Activated T-helper 1 cell treated with anti-CD3 and anti-CD28 coated beads, Interleukin-12 subunit alpha, Interleukin-12 subunit beta, Interleukin-2, Interleukin-4 antibody, amounts not matched to agents 30 ng/mL and 10 ng/mL and 1 ng/mL, durations not matched to agents 14 hours and 24 hours and 36 hours (primary cell): ENCODE measurements at regions of chr7 and their contacts with region 1.

Region 1: DNA sequence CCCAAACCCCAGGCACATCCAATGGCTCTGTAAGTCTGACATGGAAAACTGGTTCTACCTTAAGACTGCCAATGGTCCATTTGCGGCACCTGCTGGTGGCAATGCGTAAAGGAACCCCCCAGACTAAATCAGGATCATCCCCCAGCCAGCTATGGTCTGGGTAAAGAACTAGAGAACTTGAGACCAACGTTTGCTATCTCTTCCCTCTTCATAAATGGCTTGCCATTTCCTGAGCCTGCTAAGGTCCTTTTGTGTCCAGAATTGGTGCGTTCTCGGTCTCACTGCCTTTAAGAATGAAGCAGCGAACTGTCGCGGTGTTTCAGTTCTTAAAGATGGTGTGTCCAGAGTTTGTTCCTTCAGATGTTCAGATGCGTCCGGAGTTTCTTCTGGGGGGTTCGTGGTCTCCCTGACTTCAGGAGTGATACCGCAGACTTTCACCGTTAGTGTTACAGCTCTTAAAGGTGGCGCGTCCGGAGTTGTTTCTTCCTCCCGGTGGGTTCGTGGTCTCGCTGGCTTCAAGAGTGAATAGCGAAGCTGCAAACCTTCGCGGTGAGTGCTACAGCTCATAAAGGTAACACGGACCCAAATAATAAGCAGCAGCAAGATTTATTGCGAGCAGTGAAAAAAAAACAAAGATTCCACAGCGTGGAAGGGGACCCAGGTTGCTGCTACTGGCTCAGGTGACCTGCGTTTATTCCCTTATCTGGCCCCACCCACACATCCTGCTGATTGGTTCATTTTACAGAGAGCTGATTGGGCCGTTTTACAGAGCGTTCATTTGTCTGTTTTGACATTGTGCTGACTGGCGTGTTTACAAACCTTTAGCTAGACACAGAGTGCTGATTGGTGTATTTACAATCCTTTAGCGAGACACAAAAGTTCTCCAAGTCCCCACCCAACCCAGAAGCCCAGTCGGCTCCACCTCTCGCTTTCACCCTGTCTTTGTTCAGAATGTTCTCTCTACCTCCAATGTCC is 95.4 kb downstream of the ELMO1 start:
- DNase-seq: peak; percentile 71
- H3K4me3 Mint-ChIP-seq: peak overlapping the region; percentile 93
- H3K27ac Mint-ChIP-seq: peak overlapping the region; percentile 97
- H3K4me1 Mint-ChIP-seq: peaks cover 90% of the 10 kb centered on the region
- H3K27me3 Mint-ChIP-seq: no peaks in the 10 kb centered on the region

Region 2: DNA sequence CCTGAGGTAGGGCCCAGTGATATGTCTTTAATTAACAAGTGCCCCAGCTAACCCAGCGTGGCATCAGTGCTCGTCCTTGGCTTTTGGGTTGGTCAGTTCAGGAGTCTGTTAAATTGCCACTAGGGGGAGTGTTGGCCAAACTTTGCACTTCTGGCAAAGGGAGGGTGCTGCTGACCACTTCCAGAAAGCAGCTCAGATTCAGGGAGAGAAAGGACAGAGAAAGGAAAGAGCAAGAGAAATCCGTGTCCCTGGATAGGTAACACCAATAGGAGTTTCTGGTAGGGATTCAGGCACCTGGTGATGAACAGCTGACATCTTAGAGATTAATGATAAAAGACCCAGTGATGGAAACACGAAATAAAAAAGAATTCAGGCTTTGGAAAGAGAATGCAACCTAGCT is 385.9 kb before region 1 on chr7:
- intact Hi-C with region 1: loop called (anchors 10 kb)
- DNase-seq: no peak
- H3K4me3 Mint-ChIP-seq: no peak overlapping the region
- H3K27ac Mint-ChIP-seq: no peak overlapping the region
- H3K4me1 Mint-ChIP-seq: peaks cover 45% of the 10 kb centered on the region
- H3K27me3 Mint-ChIP-seq: no peaks in the 10 kb centered on the region

Region 3: GRCh38 chr7:37109843-37110242 is 243.4 kb before region 1 on chr7:
- intact Hi-C with region 1: no loop called
- DNase-seq: no peak
- H3K4me3 Mint-ChIP-seq: no peak overlapping the region
- H3K27ac Mint-ChIP-seq: peak overlapping the region; percentile 57
- H3K4me1 Mint-ChIP-seq: peaks cover 38% of the 10 kb centered on the region
- H3K27me3 Mint-ChIP-seq: no peaks in the 10 kb centered on the region

Region 4: GRCh38 chr7:37284805-37285231 is 68.4 kb before region 1 on chr7:
- intact Hi-C with region 1: loop called (anchors 1 kb)
- DNase-seq: no peak
- H3K4me3 Mint-ChIP-seq: no peak overlapping the region
- H3K27ac Mint-ChIP-seq: no peak overlapping the region
- H3K4me1 Mint-ChIP-seq: peaks cover 48% of the 10 kb centered on the region
- H3K27me3 Mint-ChIP-seq: no peaks in the 10 kb centered on the region

Region 5: DNA sequence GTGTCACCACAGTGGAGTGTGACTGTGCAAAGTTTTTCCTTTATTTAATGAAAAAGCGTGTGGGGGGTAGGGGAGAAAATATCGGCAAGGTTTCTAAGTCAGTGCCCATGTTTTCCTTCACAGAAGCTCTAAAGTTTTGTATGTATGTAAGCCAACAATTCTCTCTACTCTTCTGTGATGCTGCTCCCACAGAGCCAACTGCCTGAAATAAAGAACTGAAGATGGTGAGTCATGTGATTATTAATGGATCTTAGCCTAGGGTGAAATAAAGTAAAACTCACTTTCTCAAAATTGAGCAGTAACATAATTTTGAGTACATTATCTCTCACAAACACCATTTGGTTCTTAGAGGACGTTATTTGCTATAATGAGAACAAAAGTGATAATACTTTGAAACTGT is 48.3 kb before region 1 on chr7:
- intact Hi-C with region 1: no loop called
- DNase-seq: no peak
- H3K4me3 Mint-ChIP-seq: no peak overlapping the region
- H3K27ac Mint-ChIP-seq: no peak overlapping the region
- H3K4me1 Mint-ChIP-seq: peaks cover 24% of the 10 kb centered on the region
- H3K27me3 Mint-ChIP-seq: no peaks in the 10 kb centered on the region

Region 6: DNA sequence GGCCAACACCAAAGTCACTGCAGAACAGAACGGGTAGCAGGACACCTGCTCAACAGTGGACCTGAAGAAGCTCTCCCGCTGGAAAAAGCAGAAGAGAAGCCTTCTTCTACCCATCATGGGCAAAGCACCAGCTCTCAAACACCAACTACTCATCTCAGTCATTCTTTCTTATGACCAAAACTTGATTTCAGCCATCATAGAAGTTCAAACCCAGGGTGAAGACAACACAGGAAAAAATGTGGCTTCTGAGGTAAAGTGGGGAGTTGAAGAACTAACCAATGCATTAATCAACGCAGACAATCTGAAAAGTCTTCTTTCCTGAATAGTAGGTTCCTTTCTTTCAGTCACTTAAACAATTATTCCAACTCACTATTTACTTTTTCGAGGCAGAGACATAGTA is 12.1 kb after region 1 on chr7:
- intact Hi-C with region 1: loop called (anchors 1 kb)
- DNase-seq: no peak
- H3K4me3 Mint-ChIP-seq: peak overlapping the region; percentile 16
- H3K27ac Mint-ChIP-seq: peak overlapping the region; percentile 3
- H3K4me1 Mint-ChIP-seq: peaks cover 56% of the 10 kb centered on the region
- H3K27me3 Mint-ChIP-seq: peaks cover 2% of the 10 kb centered on the region

Region 7: GRCh38 chr7:37495574-37496184 is 142.4 kb after region 1 on chr7:
- intact Hi-C with region 1: loop called (anchors 2 kb)
- DNase-seq: no peak
- H3K4me3 Mint-ChIP-seq: no peak overlapping the region
- H3K27ac Mint-ChIP-seq: no peak overlapping the region
- H3K4me1 Mint-ChIP-seq: peaks cover 10% of the 10 kb centered on the region
- H3K27me3 Mint-ChIP-seq: no peaks in the 10 kb centered on the region